Activated CD4-positive, alpha-beta T cell treated with anti-CD3 and anti-CD28 coated beads for 36 hours (primary cell): ENCODE measurements at regions of chr3 and their contacts with region 1.

Region 1: GRCh38 chr3:141311496-141312353 is 56.6 kb upstream of the ZBTB38 start:
- DNase-seq: peak; percentile 99
- ATAC-seq: peak; percentile 90
- H3K4me3 Mint-ChIP-seq: peak overlapping the region; percentile 81
- H3K27ac Mint-ChIP-seq: peak overlapping the region; percentile 98
- H3K4me1 Mint-ChIP-seq: peaks cover 45% of the 10 kb centered on the region
- H3K27me3 Mint-ChIP-seq: no peaks in the 10 kb centered on the region

Region 2: GRCh38 chr3:140941434-140942220 is 370.1 kb before region 1 on chr3 and contains the start of gene SLC25A36:
- CTCF ChIA-PET with region 1: no interaction called
- POLR2A ChIA-PET with region 1: no interaction called
- intact Hi-C with region 1: loop called in 1 of 2 experiments (anchors 1 kb)
- DNase-seq: peak; percentile 99
- ATAC-seq: peak; percentile 98
- H3K4me3 Mint-ChIP-seq: peak within 1 kb of the TSS; percentile 93
- H3K27ac Mint-ChIP-seq: peak within 1 kb of the TSS; percentile 95
- H3K4me1 Mint-ChIP-seq: peaks cover 37% of the 10 kb centered on the region
- H3K27me3 Mint-ChIP-seq: no peaks in the 10 kb centered on the region
- total RNA-seq, gene SLC25A36: 42.3 to 62.3 TPM

Region 3: GRCh38 chr3:141127344-141128125 is 184.2 kb before region 1 on chr3:
- CTCF ChIA-PET with region 1: no interaction called
- POLR2A ChIA-PET with region 1: no interaction called
- intact Hi-C with region 1: no loop called
- DNase-seq: no peak
- ATAC-seq: no peak
- H3K4me3 Mint-ChIP-seq: no peak overlapping the region
- H3K27ac Mint-ChIP-seq: no peak overlapping the region
- H3K4me1 Mint-ChIP-seq: no peaks in the 10 kb centered on the region
- H3K27me3 Mint-ChIP-seq: peaks cover 6% of the 10 kb centered on the region

Region 4: DNA sequence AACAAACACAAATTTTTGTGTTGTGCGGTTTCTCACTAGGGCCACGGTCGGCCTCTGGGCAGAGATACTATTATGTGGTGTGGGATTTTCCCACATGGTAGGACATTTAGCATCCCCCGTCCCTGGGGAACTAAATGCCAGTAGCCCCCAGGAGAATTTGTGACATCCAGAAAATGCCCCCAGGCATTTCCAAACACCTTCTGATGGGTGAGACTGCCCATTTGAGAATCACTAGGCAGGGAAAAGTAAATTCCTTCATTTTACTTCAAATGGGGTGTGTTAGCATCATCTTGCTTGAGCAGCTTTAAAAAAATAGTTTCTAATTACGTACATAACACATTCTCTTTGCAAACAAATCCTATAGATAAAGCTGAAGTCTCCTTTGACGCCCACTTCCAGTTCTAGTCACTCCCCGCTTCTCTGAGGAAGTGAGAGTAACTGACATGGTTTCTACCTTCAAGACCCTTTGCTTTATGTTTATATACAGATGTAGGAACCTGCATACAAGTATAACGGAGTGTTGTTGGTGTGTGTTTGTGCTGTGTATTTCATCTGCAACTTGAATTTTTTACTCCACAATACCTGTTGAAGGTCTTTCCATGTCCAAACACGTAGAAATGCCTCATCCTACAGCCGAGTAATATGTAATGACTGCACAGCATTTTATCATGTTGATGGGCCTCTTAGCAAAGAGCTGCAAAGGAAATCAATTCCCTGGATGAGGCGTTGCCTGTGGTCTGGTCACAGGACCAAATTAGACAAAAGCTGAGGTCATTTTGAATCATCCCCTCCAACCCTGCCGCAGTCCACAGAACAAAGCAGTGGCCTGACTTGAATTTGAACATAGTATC is 25.2 kb after region 1 on chr3:
- CTCF ChIA-PET with region 1: no interaction called
- POLR2A ChIA-PET with region 1: no interaction called
- intact Hi-C with region 1: no loop called
- DNase-seq: no peak
- ATAC-seq: no peak
- H3K4me3 Mint-ChIP-seq: no peak overlapping the region
- H3K27ac Mint-ChIP-seq: no peak overlapping the region
- H3K4me1 Mint-ChIP-seq: peaks cover 3% of the 10 kb centered on the region
- H3K27me3 Mint-ChIP-seq: peaks cover 5% of the 10 kb centered on the region

Region 5: DNA sequence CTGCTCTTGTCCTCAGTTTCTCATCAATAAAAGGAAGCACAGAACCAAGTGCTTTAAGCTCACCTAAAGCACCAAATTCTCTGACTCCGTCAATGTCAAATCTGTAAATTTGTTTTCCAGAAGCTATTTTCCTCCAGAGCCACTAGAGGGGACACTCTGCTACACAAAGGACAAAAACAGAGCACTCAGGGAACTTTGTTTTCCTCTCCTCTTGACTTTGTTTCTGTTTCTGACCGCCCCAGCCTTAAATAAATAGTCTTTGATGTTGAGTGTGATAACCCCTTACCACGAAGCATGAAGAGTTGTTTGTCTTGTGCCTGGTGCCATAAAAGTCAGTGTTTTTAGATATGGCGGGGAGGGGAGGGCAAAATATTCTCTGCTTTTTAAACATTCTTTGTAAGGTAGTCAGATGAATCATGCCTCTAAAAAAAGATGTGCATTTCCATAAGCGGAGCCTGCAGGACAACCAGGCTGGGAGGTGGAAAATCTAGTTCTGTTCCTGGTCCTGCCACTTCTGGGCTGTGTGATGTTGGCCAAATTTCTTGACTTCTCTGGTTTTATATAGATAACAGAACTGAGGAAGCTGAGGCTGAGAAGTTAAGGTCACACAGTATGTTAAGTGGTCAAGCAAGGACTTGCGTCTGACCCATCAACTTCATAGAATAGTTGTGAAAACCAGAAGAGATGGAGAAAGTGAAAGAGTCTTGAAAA is 49.3 kb after region 1 on chr3:
- CTCF ChIA-PET with region 1: interaction called, 13 read pairs
- POLR2A ChIA-PET with region 1: no interaction called
- intact Hi-C with region 1: loop called in 1 of 2 experiments (anchors 2 kb)
- DNase-seq: no peak
- ATAC-seq: peak; percentile 87
- H3K4me3 Mint-ChIP-seq: peak overlapping the region; percentile 20
- H3K27ac Mint-ChIP-seq: peak overlapping the region; percentile 55
- H3K4me1 Mint-ChIP-seq: peaks cover 9% of the 10 kb centered on the region
- H3K27me3 Mint-ChIP-seq: no peaks in the 10 kb centered on the region

Region 6: DNA sequence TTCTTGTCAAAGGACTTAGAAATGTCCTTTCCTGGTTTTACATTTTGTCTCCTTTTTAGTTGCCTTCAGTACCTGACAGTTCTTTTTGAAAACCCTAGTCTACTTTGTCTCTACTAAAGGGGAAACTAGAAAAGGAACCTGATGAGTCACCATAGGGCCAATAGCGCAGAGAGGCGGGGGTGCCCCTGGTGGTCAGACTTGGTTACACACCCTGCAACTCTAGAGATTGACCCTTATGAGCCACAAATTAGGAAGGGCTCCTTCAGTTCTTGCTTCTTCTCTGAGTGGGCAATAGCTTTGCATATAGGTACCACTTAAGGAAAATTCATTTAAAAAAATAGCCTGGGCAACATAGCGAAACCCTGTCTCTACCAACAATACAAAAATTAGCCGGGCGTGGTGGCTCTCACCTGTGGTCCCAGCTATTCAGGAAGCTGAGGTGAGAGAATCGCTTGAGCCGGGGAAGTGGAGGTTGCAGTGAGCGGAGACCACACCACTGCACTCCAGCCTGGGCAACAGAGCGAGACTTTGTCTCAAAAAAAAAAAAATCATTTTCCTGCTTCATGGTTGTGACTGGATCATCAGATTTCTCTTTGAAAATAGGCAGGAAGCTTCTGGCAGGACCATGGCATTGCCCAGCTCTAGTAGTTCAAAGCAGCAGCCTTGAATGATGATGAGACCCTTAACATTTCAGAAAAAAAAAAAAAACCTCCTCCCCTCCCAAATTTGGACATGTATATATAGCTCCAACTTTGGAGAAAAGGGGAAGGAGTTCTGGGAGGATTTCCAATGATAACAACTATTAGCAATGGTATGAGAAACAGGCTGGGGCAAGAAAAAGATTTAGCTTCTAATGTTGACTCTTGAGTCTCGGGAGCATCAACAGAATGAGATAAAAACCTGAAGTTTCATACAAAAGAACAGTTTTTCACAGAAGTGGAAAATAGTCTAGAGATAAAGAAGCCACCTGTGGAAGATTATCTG is 129.9 kb after region 1 on chr3:
- CTCF ChIA-PET with region 1: interaction called, 16 read pairs
- POLR2A ChIA-PET with region 1: no interaction called
- intact Hi-C with region 1: loop called (anchors 2 kb)
- DNase-seq: peak; percentile 87
- ATAC-seq: peak; percentile 98
- H3K4me3 Mint-ChIP-seq: no peak overlapping the region
- H3K27ac Mint-ChIP-seq: peak overlapping the region; percentile 76
- H3K4me1 Mint-ChIP-seq: peaks cover 25% of the 10 kb centered on the region
- H3K27me3 Mint-ChIP-seq: no peaks in the 10 kb centered on the region

Region 7: DNA sequence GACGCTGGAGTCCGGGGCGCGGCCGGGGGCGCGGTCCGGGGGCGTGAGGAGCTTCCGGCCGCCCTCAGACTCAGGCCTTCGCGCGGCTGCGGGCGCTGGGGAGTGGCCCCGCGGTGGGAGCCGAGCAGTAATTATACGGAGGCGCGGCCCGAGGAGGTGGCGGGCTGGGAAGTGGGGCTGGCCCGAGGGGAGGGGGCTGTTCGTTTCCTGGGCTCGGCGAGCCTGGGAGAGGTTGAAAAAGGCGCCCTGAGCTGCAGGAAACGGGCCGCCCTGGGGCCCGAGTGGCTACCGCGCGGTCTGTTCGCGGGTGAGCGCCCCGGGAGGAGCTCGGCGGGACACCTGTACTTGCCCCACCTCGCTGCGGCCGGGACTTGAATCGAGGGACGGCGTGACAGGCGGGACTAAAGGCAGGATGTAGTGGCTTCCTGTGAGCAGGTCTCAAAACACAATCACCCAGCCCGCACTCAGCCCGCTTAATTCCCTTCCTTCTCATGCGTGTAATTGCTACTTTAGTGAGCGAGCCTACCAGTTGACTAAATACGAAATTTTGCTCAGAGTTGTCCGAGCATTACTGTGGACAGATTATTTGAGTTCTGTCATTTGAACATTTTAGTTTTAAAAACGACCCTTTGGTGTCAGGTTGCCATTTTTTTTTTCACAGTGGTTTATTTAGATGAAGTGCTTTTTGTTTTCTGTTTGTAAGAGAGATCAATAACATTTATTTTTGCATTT is 176.0 kb after region 1 on chr3:
- CTCF ChIA-PET with region 1: interaction called, 4 read pairs
- POLR2A ChIA-PET with region 1: interaction called, 3 read pairs
- intact Hi-C with region 1: loop called in 1 of 2 experiments (anchors 1 kb)
- DNase-seq: peak; percentile 93
- ATAC-seq: peak; percentile 69
- H3K4me3 Mint-ChIP-seq: peak overlapping the region; percentile 77
- H3K27ac Mint-ChIP-seq: peak overlapping the region; percentile 94
- H3K4me1 Mint-ChIP-seq: peaks cover 64% of the 10 kb centered on the region
- H3K27me3 Mint-ChIP-seq: no peaks in the 10 kb centered on the region

Region 8: GRCh38 chr3:141796081-141796888 is 484.6 kb after region 1 on chr3:
- CTCF ChIA-PET with region 1: no interaction called
- POLR2A ChIA-PET with region 1: no interaction called
- intact Hi-C with region 1: loop called in 1 of 2 experiments (anchors 2 kb)
- DNase-seq: peak; percentile 90
- ATAC-seq: peak; percentile 84
- H3K4me3 Mint-ChIP-seq: peak overlapping the region; percentile 77
- H3K27ac Mint-ChIP-seq: peak overlapping the region; percentile 97
- H3K4me1 Mint-ChIP-seq: peaks cover 52% of the 10 kb centered on the region
- H3K27me3 Mint-ChIP-seq: no peaks in the 10 kb centered on the region

Region 9: DNA sequence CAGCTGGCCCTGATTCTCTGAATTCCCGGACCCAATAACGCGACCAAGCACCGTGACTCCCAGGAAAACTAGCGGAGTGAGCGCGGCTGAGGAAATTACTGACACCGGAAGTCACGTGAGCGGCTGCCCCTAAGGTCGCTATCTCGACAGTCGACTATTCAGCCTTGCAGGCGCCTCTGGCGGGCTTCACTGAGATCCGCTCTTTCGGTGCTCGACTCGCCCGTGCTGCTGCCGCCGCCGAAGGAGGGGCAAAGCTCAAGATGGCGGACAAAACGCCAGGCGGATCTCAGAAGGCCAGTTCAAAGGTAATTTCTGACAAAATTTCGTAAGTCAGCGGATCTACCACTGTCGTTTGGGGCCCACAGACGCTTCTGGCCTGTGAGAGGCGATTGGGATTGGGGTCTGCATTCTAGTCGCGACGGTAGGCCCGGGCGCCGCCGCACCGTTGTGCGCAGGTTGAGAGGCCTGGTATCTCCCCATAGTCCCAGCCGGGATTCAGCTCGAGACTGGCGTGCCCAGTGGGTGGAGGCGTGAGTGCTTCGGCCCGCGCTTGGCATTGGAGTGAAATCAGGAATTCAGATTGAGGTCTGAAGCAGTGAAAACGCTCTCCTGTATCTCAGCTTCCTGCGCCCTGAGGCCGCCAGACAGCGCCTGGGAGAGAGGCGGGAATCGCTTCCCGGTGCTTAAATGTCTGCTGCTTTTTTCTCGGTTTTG is 1689.8 kb after region 1 on chr3 and contains the start of gene U2SURP:
- CTCF ChIA-PET with region 1: no interaction called
- POLR2A ChIA-PET with region 1: no interaction called
- intact Hi-C with region 1: loop called in 1 of 2 experiments (anchors 5 kb)
- DNase-seq: peak; percentile 96
- ATAC-seq: peak; percentile 86
- H3K4me3 Mint-ChIP-seq: peak within 1 kb of the TSS; percentile 91
- H3K27ac Mint-ChIP-seq: peak within 1 kb of the TSS; percentile 99
- H3K4me1 Mint-ChIP-seq: peaks cover 40% of the 10 kb centered on the region
- H3K27me3 Mint-ChIP-seq: no peaks in the 10 kb centered on the region
- total RNA-seq, gene U2SURP: 208 to 248 TPM